ENCODE measurements at regions of chr2 and their contacts with region 1.

Region 1: DNA sequence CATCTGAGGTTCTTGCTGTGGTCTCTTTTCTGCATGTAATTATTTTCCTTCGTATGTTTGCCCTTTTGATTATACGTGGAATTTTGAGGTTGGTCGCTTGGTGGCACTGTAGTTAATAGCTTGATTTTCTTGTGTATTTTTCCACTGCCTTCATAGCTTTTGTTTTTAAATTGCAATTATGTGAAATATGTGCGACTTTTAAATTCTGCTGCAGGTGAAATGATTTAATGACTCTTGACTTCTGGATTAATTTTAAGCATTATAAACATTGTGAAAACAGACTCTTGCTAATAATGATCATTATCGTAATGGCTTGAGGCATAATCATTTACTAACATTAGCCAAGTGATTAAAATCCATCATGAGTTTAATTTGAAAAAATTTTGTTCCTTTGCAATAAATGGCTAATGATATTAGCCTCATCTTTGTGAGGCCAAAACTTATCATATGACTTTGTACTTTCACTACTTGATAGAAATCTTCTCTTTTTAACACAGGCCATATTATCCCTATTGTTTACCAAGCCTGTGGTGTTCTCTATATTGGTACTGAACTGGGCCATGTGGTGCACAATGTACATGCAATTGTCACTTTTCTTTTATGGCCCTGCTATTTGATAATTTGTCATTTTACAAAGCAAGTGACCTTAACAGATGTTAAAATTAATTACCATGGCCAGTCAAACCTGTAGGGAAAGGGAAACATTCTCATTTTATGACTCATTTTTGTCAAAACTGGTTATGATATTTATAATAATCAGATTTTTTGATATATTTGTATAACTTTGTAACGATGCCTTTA is 62.8 kb upstream of the NEUROD1 start:
- DNase-seq: peak in 1 of 3 donors; percentile 16
- ATAC-seq: peak; percentile 48 to 50
- H3K4me3 ChIP-seq: no peak overlapping the region
- H3K27ac ChIP-seq: no peak overlapping the region
- H3K4me1 ChIP-seq: no peaks in the 10 kb centered on the region
- H3K27me3 ChIP-seq: no peaks in the 10 kb centered on the region

Region 2: GRCh38 chr2:181552808-181553207 is 190.3 kb before region 1 on chr2:
- intact Hi-C with region 1: no loop called
- DNase-seq: no peak
- ATAC-seq: no peak
- H3K4me3 ChIP-seq: no peak overlapping the region
- H3K27ac ChIP-seq: no peak overlapping the region
- H3K4me1 ChIP-seq: no peaks in the 10 kb centered on the region
- H3K27me3 ChIP-seq: no peaks in the 10 kb centered on the region

Region 3: GRCh38 chr2:181904022-181904632 is 161.0 kb after region 1 on chr2:
- intact Hi-C with region 1: loop called in 3 of 4 experiments (anchors 5 to 10 kb)
- DNase-seq: no peak
- ATAC-seq: peak in 1 of 2 donors; percentile 36
- H3K4me3 ChIP-seq: no peak overlapping the region
- H3K27ac ChIP-seq: no peak overlapping the region
- H3K4me1 ChIP-seq: peaks cover 1% of the 10 kb centered on the region
- H3K27me3 ChIP-seq: no peaks in the 10 kb centered on the region

Region 4: DNA sequence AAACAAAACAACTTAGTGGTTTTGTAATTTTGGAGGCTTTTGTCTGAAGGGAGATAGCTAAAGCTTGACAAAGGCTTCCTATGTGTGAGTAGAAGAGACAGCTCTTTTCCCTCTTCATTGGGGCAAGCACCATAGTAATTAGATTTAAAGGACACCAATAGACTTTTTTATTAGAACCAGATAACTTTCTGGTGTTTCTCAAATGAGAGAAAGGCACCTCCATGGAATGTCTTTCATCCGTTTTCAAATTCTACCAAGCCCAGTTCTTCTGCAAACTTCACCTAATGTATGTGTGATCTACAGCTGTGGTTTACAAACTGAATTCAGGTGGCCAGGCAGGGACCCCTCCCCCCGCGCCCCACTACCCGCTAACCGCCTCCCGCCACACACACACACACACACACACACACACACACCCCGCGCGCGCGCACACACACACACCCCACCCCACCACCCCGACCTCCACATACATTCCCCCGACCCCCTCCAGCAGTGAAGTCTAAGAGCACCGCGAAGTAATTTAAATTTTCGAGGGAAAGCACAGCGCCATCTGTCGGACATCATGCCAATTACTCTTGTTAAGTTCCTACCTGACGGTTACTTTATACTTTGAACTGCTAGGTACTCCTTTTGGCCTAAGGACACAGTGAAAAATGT is 210.9 kb after region 1 on chr2:
- intact Hi-C with region 1: loop called in 2 of 4 experiments (anchors 5 to 10 kb)
- DNase-seq: peak; percentile 35 to 51 (median 50)
- ATAC-seq: peak; percentile 31 to 57
- H3K4me3 ChIP-seq: peak overlapping the region; percentile 54
- H3K27ac ChIP-seq: no peak overlapping the region
- H3K4me1 ChIP-seq: no peaks in the 10 kb centered on the region
- H3K27me3 ChIP-seq: no peaks in the 10 kb centered on the region

Region 5: GRCh38 chr2:182077451-182078142 is 334.5 kb after region 1 on chr2:
- intact Hi-C with region 1: loop called in 3 of 4 experiments (anchors 5 to 10 kb)
- DNase-seq: peak; percentile 18 to 53 (median 37)
- ATAC-seq: peak; percentile 96 to 97
- H3K4me3 ChIP-seq: no peak overlapping the region
- H3K27ac ChIP-seq: no peak overlapping the region
- H3K4me1 ChIP-seq: peaks cover 2% of the 10 kb centered on the region
- H3K27me3 ChIP-seq: no peaks in the 10 kb centered on the region

Measured in right cardiac atrium (tissue), 5 donors.